Transverse colon (tissue), 4 donors: ENCODE measurements at regions of chr3 and their contacts with region 1.

Region 1: GRCh38 chr3:22939349-22939748 is 263.8 kb upstream of the UBE2E2 start:
- DNase-seq: no peak
- H3K4me3 ChIP-seq: no peak overlapping the region
- H3K27ac ChIP-seq: no peak overlapping the region
- H3K4me1 ChIP-seq: no peaks in the 10 kb centered on the region
- H3K27me3 ChIP-seq: no peaks in the 10 kb centered on the region
- CTCF ChIP-seq: no peak
- EP300 ChIP-seq: no peak
- POLR2A ChIP-seq: no peak

Region 2: GRCh38 chr3:22835041-22835440 is 104.3 kb before region 1 on chr3:
- in situ Hi-C with region 1: loop called in 1 of 4 experiments (anchors 25 kb)
- intact Hi-C with region 1: no loop called
- DNase-seq: no peak
- H3K4me3 ChIP-seq: no peak overlapping the region
- H3K27ac ChIP-seq: no peak overlapping the region
- H3K4me1 ChIP-seq: peaks cover 0 to 18% (median 0%) of the 10 kb centered on the region in 4 donors
- H3K27me3 ChIP-seq: no peaks in the 10 kb centered on the region
- CTCF ChIP-seq: no peak
- EP300 ChIP-seq: no peak
- POLR2A ChIP-seq: no peak